ENCODE measurements at regions of chr19 and their contacts with region 1.

Region 1: DNA sequence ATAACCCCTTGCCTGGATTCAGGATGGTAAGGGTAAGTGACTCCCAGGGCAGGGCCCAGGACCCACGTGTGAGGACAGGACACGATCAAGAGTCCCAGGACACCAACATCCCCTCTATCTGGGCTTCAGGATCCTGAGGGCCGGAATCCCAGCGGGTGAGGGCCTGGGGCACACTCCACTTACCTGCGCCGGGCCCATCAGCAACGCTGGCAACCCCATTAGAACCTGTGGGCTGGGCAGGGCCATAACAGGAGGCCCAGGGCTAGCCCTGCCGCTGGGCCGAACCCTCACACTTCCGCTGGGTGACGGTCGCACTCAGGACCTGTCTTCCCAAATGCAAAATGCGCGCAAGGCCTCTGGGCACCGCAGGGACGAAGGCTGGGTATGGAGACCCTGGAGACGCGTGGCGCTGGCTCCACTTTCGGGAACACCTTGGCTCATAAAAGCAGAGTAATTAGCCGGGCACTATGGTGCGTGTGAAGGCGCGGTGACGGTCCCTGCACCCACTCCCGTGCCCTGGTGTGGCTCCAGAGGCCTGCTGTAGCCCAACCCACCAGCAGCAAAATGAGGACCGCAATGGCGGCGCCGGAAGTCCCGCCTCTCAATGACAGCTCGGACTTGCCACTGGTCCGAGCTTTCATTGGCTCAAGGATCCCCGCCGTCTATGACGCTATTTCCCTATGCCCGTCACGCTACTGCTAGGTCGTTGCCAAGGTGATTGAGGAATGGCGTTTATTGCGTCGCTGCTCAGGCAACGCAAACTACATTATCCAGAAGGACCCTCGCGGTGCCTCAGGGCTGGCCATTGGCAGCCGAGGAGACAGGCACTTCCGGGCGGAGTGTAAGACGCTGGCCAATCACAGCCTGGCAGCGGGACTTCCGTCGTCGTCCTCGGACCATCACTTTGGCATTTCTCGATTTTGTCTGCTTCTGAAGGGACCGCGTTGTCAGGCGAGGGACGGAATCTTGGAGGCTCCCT is at the start of gene ZNF132:
- DNase-seq: peak; percentile 97 to 100 (median 99)

Region 2: GRCh38 chr19:58386576-58387337 is 53.1 kb before region 1 on chr19 and contains the start of gene RPS5:
- intact Hi-C with region 1: no loop called
- DNase-seq: peak; percentile 94 to 99 (median 96)

Region 3: GRCh38 chr19:58408152-58409009 is 31.5 kb before region 1 on chr19 and contains the start of gene ZNF584:
- intact Hi-C with region 1: loop called (anchors 5 kb)
- DNase-seq: peak; percentile 94 to 100 (median 97)

Region 4: DNA sequence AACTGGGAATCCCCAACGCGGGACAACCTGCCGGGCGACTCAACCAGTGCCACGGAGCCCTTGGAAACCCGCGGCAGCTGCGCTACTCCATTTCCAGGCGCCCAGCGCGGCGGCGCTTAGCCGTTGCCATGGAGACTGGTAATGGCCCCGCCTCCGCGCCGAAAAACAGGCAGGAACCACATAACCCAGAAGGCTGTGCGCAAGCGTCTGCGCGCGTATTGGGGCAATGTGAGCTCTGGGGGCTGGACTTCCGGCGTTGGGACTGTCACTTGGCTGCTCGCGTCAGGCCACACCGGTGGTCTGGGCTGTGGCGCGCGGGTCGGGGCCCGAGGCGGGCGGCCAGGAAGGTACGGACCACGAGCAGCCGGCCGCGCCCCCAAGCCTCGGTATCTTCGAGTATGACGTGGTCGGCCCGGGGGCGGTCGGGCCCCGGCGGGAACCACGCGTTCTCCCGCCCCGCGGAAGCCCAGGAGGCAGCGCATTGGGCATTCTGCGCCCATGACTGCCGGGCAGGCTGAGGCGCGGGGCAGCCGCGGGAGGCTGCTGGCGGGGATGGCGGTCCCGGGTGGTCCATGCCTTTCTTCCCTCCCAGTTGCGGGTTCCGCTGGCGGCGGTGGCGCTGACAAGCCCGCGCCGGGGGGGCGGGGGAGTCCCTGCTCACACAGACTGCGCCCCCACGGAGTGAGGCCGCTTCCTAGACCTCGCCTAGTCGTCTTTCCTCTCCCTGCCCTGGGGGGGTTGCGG is 11.7 kb after region 1 on chr19 and contains the start of gene ZNF324B:
- intact Hi-C with region 1: loop called (anchors 1 kb)
- DNase-seq: peak; percentile 95 to 100 (median 98)

Region 5: DNA sequence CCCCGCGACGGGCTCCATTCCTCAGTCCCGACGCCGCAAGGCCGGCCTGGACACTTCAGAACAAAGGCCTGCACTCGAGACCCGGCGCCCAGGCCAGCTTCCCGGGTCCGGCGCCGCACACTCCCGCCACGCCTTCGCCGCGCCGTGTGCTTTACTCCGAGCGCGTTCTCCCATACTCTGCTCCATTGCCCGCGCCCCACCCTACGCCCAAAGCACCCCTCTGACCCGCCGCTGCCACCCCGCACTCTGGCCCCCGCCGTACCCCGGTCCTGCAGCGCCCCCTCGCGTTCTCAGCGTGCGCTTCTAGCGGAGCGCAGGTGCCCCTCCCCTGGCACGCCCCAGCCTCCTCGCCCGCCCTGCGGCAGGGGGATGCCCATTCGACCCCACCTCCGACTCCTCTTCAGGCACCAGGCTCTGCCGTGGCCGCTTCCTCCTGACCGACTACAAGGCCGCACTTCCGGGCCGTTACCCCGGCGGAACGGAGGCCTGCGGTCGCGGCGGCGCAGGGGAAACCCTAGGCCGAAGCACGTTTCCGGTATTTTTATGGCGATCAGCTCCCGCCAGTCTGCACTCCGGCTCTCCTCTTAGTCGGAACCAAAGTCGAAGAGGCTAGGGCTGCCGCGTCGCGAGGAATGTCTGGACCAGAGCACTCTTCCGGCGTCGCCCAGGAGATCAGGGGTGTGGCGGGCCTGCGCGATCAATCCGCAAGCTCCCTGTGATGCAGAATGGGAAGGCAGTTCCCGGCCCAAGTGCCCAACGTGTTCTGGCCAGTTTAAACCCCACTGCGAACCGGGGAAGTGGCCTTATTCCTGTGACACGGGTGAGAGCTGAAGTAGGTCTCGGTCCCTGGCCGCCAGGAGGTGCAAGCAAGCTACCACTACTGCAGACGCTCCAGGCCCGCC is 79.7 kb after region 1 on chr19 and contains the start of gene ZBTB45:
- intact Hi-C with region 1: loop called (anchors 2 kb)
- DNase-seq: peak; percentile 87 to 99 (median 92)

Measured in posterior cingulate gyrus (tissue), 11 donors.